GM12878 (cell line): ENCODE measurements at regions of chr3 and their contacts with region 1.

Region 1: DNA sequence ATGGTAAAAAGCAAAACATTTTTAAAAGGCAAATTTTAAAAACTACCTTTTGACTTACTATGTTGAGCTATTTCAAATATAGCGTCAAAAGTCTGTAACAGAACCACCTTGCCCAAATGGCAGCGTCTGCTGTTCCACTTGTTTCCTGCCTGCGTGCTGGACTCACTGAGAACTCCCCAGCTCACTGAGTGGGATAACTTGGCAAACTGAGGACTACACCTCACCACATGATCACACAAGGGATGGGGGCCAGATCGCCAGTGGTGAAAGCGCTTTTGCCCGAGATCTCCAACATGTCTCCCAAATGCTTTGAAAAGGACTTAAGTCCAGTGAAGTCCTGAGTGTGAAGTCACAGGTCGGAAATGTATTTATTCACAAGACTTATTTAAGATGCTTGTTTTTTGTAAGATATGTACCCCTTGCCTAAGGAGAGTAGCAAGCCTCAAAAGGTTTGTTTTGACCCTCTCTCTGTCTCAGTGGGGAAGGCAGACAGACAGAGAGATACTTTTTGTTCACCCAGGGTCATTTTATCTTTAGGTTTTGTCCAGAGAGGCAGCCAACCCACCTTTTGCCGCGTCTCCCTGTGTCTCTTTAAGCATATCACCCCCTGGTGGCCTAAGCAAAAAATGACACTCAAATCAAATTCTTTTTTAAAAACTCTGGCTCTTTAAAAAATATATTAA is 192.6 kb downstream of the PDZRN3 start:
- DNase-seq: no peak
- ATAC-seq: peak; percentile 48; the same call in 2 of the 3 replicates
- H3K4me3 ChIP-seq: no peak overlapping the region
- H3K27ac ChIP-seq: no peak overlapping the region
- H3K4me1 ChIP-seq: no peaks in the 10 kb centered on the region
- H3K27me3 ChIP-seq: no peaks in the 10 kb centered on the region
- CTCF ChIP-seq: peak; percentile 53 to 62 (median 62)
- EP300 ChIP-seq: no peak
- POLR2A ChIP-seq: no peak
- RAD21 ChIP-seq: peak; percentile 62

Region 2: GRCh38 chr3:73100741-73101559 is 331.2 kb before region 1 on chr3:
- CTCF ChIA-PET with region 1: interaction called, 7 read pairs
- POLR2A ChIA-PET with region 1: no interaction called
- RAD21 ChIA-PET with region 1: interaction called, 3 read pairs
- SMC1A ChIA-PET with region 1: interaction called, 3 read pairs
- in situ Hi-C with region 1: no loop called
- intact Hi-C with region 1: loop called (anchors 1 kb)
- DNase-seq: peak; percentile 23
- ATAC-seq: peak; percentile 98
- H3K4me3 ChIP-seq: no peak overlapping the region
- H3K27ac ChIP-seq: no peak overlapping the region
- H3K4me1 ChIP-seq: no peaks in the 10 kb centered on the region
- H3K27me3 ChIP-seq: no peaks in the 10 kb centered on the region; a peak in 1 of 4 replicates
- CTCF ChIP-seq: peak; percentile 89 to 95 (median 95); a peak in 5 of 6 replicates
- EP300 ChIP-seq: no peak
- POLR2A ChIP-seq: no peak
- RAD21 ChIP-seq: peak; percentile 87

Region 3: GRCh38 chr3:73480187-73480672 is 48.1 kb after region 1 on chr3:
- CTCF ChIA-PET with region 1: no interaction called
- POLR2A ChIA-PET with region 1: no interaction called
- RAD21 ChIA-PET with region 1: no interaction called
- SMC1A ChIA-PET with region 1: no interaction called
- in situ Hi-C with region 1: no loop called
- intact Hi-C with region 1: no loop called
- DNase-seq: no peak
- ATAC-seq: no peak; the same call in 2 of the 3 replicates
- H3K4me3 ChIP-seq: no peak overlapping the region
- H3K27ac ChIP-seq: no peak overlapping the region
- H3K4me1 ChIP-seq: peaks cover 17% of the 10 kb centered on the region
- H3K27me3 ChIP-seq: no peaks in the 10 kb centered on the region
- CTCF ChIP-seq: no peak
- EP300 ChIP-seq: no peak
- POLR2A ChIP-seq: no peak
- RAD21 ChIP-seq: no peak